Gastrocnemius medialis (tissue), 4 donors: ENCODE measurements at regions of chr11 and their contacts with region 1.

Region 1: GRCh38 chr11:4441515-4441914 is 7.6 kb upstream of the OR52K2 start:
- DNase-seq: no peak
- ATAC-seq: no peak
- H3K4me3 ChIP-seq: no peak overlapping the region
- H3K27ac ChIP-seq: no peak overlapping the region
- H3K4me1 ChIP-seq: no peaks in the 10 kb centered on the region
- H3K27me3 ChIP-seq: no peaks in the 10 kb centered on the region
- CTCF ChIP-seq: no peak
- POLR2A ChIP-seq: no peak

Region 2: GRCh38 chr11:4370166-4370565 is 71.3 kb before region 1 on chr11:
- in situ Hi-C with region 1: no loop called
- intact Hi-C with region 1: no loop called
- DNase-seq: no peak
- ATAC-seq: no peak
- H3K4me3 ChIP-seq: no peak overlapping the region
- H3K27ac ChIP-seq: no peak overlapping the region
- H3K4me1 ChIP-seq: no peaks in the 10 kb centered on the region
- H3K27me3 ChIP-seq: no peaks in the 10 kb centered on the region
- CTCF ChIP-seq: no peak
- POLR2A ChIP-seq: no peak

Region 3: DNA sequence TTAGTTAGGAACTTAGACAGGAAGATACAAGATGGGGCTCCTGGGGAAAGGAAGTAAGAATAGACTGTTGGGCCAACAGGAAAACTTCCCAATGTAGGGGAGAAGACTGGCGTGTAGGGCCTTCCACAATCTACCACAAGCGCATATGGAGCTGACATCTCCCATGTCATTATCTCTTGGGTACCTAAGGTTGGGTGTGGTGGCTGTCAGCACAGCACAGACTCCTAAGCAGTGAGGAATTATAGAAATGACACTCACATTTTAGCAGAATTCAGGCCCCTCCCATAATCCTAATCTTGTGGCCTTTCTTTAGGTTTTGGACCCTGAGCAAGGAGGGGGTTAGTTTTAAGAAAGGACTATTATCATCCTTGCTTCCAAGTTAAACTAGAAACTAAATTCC is 59.6 kb before region 1 on chr11:
- in situ Hi-C with region 1: no loop called
- intact Hi-C with region 1: loop called (anchors 10 kb)
- DNase-seq: no peak
- ATAC-seq: no peak
- H3K4me3 ChIP-seq: no peak overlapping the region
- H3K27ac ChIP-seq: no peak overlapping the region
- H3K4me1 ChIP-seq: no peaks in the 10 kb centered on the region
- H3K27me3 ChIP-seq: no peaks in the 10 kb centered on the region
- CTCF ChIP-seq: no peak
- POLR2A ChIP-seq: no peak

Region 4: DNA sequence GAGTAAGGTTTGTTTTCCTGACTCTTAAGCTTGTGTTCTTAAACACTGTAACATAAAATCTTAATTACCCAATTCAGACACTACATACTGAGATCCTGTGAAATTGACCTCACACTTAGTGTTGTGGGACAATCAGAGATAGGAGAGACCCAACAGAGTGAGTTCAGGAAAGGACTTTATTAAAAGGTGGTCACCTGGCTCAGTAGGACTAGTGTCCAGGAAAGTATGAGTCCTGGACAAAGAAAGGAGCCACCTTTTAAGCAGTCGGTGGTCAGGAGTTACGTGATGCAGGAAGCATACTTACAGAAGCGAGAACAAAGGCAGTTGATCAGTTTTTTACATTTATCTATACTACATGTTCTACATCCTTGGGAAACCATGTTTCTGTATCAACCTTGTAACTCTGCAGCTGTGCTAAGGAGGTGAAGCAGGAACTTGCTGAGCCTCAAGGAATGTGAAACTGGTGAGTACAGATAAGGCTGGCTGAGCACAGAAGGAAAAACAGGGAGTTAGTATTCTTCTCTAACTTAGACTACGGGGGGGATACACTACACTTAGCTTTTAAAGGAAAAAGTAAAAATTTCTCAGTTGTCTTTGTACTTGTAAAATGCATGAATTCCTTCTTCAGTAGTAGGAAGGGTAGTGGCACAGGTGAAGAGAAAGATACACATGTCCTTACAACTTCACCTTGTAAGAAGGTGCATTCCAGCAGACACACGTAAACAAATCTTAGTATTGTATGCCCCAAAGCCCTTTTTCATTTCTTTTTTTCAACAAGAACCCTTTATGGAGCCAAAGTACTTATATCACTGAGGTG is 217.3 kb after region 1 on chr11:
- in situ Hi-C with region 1: no loop called
- intact Hi-C with region 1: no loop called
- DNase-seq: no peak
- ATAC-seq: no peak
- H3K4me3 ChIP-seq: no peak overlapping the region
- H3K27ac ChIP-seq: no peak overlapping the region
- H3K4me1 ChIP-seq: peaks cover 0 to 4% of the 10 kb centered on the region in 2 donors
- H3K27me3 ChIP-seq: no peaks in the 10 kb centered on the region
- CTCF ChIP-seq: no peak
- POLR2A ChIP-seq: no peak